ENCODE measurements at regions of chr6 and their contacts with region 1.

Region 1: DNA sequence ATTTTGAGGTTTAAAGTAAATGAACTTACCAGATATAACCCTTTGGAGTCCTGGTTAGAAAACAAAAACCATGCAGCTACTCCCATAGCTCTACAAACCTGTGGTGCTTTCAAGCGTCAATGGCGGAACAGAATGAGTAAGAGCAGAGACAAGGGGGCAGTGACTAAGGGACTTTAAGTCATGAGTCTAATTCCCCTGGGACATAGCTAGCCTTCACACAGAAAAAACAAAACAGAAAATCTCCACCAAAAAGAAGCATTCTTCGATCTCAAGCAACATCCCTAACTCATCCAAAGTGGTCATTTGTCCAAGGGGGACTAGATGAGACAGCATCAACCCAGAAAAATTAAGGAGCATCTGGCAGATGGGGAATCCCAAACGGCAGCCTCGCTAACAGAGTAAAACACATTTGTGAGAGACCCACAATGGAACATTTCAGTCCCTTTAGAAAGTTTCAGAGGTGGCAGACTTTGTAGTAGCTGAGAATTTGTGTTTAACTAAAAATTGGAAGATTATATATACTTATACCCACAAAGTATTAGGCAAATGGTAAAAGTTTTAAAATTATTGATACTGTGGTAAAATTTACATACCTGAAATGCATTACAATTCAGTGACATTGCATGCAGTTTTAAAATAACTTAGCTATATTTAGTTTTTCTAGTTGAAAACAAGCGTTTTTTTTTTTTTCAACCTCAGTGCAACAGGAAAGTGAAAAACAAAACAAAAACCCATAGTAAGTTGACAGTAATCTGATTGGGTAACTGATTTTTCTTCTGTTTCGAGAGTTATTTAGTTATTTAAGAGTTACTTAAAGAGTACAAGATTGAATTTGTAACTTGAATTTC is 67.5 kb downstream of the KCNQ5 start:
- DNase-seq: peak; percentile 96
- ATAC-seq: peak; percentile 94
- H3K4me3 ChIP-seq: peak overlapping the region; percentile 63
- H3K27ac ChIP-seq: peak overlapping the region; percentile 100
- H3K4me1 ChIP-seq: peaks cover 16% of the 10 kb centered on the region
- H3K27me3 ChIP-seq: no peaks in the 10 kb centered on the region
- CTCF ChIP-seq: no peak
- EP300 ChIP-seq: peak; percentile 89 to 93; a peak in 3 of 4 replicates
- POLR2A ChIP-seq: no peak; the same call in 1 of the 2 replicates
- RAD21 ChIP-seq: peak; percentile 38

Region 2: GRCh38 chr6:71902261-71902660 is 787.1 kb before region 1 on chr6:
- CTCF ChIA-PET with region 1: no interaction called
- POLR2A ChIA-PET with region 1: no interaction called
- RAD21 ChIA-PET with region 1: no interaction called
- SMC1A ChIA-PET with region 1: no interaction called
- in situ Hi-C with region 1: no loop called
- intact Hi-C with region 1: no loop called
- DNase-seq: peak; percentile 27
- ATAC-seq: peak; percentile 74
- H3K4me3 ChIP-seq: no peak overlapping the region
- H3K27ac ChIP-seq: no peak overlapping the region
- H3K4me1 ChIP-seq: no peaks in the 10 kb centered on the region
- H3K27me3 ChIP-seq: no peaks in the 10 kb centered on the region
- CTCF ChIP-seq: no peak
- EP300 ChIP-seq: no peak
- POLR2A ChIP-seq: no peak
- RAD21 ChIP-seq: no peak

Region 3: DNA sequence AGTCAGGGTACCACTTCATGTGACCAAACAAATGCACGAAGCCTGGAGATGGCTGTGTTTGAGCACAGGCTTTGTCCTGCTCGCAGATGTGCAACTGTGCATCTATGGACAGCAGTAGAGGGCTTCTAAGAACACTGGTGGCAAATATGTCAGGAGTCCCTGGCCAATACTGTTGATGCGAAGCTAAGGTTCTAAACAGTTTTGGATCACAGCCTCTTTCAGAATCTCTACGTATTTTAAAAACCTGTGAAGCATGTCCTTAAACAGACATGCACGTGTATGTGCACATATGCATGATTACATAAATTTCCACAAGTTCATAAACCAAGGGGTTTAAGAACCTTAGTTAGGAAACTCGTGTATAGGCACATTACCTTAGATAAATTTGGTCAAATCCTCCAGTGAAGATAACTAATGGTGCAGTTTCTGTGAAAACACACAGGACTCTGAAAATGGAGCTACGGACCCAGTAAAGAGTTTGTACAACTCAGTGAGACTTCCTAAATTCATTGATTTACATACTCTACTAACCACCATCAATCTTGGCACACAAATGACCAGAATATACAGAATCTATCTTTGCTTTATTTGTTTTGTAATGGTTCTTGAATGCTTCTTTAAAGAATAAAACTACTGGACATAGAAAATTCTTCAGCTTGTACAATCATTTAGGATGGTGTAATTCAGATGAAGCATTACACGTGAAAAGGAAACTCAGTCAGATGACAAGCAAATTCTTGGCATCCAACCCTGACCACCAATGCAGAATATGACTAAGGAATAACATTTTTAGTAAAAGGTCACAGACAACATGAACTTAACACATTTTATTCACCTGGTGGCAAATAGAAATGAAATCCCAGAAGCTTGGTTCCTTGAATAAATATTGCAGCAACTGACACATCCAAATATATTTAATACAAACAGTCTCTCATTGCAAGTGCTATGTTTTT is 40.0 kb before region 1 on chr6:
- CTCF ChIA-PET with region 1: interaction called, 6 read pairs
- POLR2A ChIA-PET with region 1: interaction called, 14 read pairs
- RAD21 ChIA-PET with region 1: interaction called, 50 read pairs
- SMC1A ChIA-PET with region 1: interaction called, 163 read pairs
- in situ Hi-C with region 1: no loop called
- intact Hi-C with region 1: loop called (anchors 2 kb)
- DNase-seq: peak; percentile 58
- ATAC-seq: peak; percentile 71
- H3K4me3 ChIP-seq: peak overlapping the region; percentile 4; the same call in 1 of the 2 replicates
- H3K27ac ChIP-seq: peak overlapping the region; percentile 77
- H3K4me1 ChIP-seq: peaks cover 25% of the 10 kb centered on the region
- H3K27me3 ChIP-seq: no peaks in the 10 kb centered on the region
- CTCF ChIP-seq: no peak
- EP300 ChIP-seq: peak; percentile 66 to 82; a peak in 3 of 4 replicates
- POLR2A ChIP-seq: 0 out of 2 replicates have a peak, but pooled peaks have one; percentile 25
- RAD21 ChIP-seq: no peak

Region 4: GRCh38 chr6:72724545-72724944 is 35.2 kb after region 1 on chr6:
- CTCF ChIA-PET with region 1: interaction called, 3 read pairs
- POLR2A ChIA-PET with region 1: interaction called, 3 read pairs
- RAD21 ChIA-PET with region 1: interaction called, 13 read pairs
- SMC1A ChIA-PET with region 1: interaction called, 38 read pairs
- in situ Hi-C with region 1: no loop called
- intact Hi-C with region 1: no loop called
- DNase-seq: peak; percentile 58
- ATAC-seq: peak; percentile 99
- H3K4me3 ChIP-seq: no peak overlapping the region
- H3K27ac ChIP-seq: no peak overlapping the region
- H3K4me1 ChIP-seq: peaks cover 2% of the 10 kb centered on the region; the same call in 1 of the 2 replicates
- H3K27me3 ChIP-seq: no peaks in the 10 kb centered on the region
- CTCF ChIP-seq: no peak
- EP300 ChIP-seq: peak in 1 of 2 experiments; percentile 55; a peak in 2 of 4 replicates
- POLR2A ChIP-seq: no peak
- RAD21 ChIP-seq: no peak

Region 5: GRCh38 chr6:72740135-72740534 is 50.8 kb after region 1 on chr6:
- CTCF ChIA-PET with region 1: interaction called, 5 read pairs
- POLR2A ChIA-PET with region 1: interaction called, 5 read pairs
- RAD21 ChIA-PET with region 1: interaction called, 29 read pairs
- SMC1A ChIA-PET with region 1: interaction called, 27 read pairs
- in situ Hi-C with region 1: no loop called
- intact Hi-C with region 1: loop called (anchors 2 kb)
- DNase-seq: peak; percentile 90
- ATAC-seq: peak; percentile 94
- H3K4me3 ChIP-seq: peak overlapping the region; percentile 50; the same call in 1 of the 2 replicates
- H3K27ac ChIP-seq: peak overlapping the region; percentile 82
- H3K4me1 ChIP-seq: peaks cover 24% of the 10 kb centered on the region
- H3K27me3 ChIP-seq: no peaks in the 10 kb centered on the region
- CTCF ChIP-seq: no peak
- EP300 ChIP-seq: peak; percentile 79 to 94
- POLR2A ChIP-seq: no peak
- RAD21 ChIP-seq: 0 out of 2 replicates have a peak, but pooled peaks have one; percentile 14

Region 6: GRCh38 chr6:73079978-73080377 is 390.6 kb after region 1 on chr6:
- CTCF ChIA-PET with region 1: interaction called, 3 read pairs
- POLR2A ChIA-PET with region 1: no interaction called
- RAD21 ChIA-PET with region 1: interaction called, 22 read pairs
- SMC1A ChIA-PET with region 1: interaction called, 14 read pairs
- in situ Hi-C with region 1: no loop called
- intact Hi-C with region 1: no loop called
- DNase-seq: peak; percentile 33
- ATAC-seq: peak; percentile 89
- H3K4me3 ChIP-seq: no peak overlapping the region
- H3K27ac ChIP-seq: peak overlapping the region; percentile 55; the same call in 1 of the 2 replicates
- H3K4me1 ChIP-seq: peaks cover 3% of the 10 kb centered on the region; the same call in 1 of the 2 replicates
- H3K27me3 ChIP-seq: no peaks in the 10 kb centered on the region
- CTCF ChIP-seq: no peak
- EP300 ChIP-seq: peak; percentile 73 to 76; a peak in 2 of 4 replicates
- POLR2A ChIP-seq: no peak
- RAD21 ChIP-seq: no peak

Measured in GM12878 (cell line).